ENCODE measurements at regions of chr10 and their contacts with region 1.

Region 1: DNA sequence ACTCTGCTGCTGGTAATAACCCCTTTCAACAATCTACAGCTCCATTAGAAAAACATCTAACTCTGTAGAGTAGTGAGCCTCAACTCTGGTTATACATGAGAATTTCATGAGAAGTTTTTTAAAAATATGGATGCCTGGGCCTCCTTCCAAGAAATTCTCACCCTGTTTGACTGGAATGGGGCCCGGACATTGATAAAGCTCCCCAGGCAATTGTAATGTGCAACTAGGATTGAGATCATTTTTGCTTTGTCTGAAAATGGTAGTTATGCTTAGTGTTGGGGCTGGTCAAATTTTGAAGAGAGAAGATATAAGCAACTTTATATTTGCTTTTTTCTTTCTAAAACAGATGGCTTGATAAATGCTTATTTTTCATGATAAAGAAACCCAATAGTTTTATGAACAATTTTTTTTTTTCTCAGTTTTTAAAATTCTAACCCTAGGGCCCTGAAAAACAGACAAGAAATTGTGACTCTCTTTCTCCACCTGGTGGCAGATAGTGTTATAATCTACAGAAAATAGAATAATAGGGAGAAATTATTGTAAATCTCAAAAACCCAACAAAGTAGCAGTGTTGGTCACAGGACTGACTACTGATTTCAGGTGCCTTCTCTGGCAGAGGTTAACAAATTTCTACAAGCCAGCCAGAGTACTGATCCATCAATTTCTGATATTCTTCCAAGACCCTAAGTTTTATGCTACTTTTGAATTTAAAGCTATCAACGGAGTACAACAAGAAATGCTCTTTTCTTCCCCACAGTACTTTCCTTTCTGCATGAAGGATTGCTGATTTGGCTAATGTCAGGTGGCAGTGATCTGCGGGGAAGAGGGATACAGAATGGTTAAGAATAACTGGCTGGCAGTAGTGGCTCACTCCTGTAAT is 174.8 kb downstream of the DKK1 start:
- DNase-seq: peak; percentile 99
- ATAC-seq: peak; percentile 21
- H3K4me3 ChIP-seq: peak overlapping the region; percentile 10; the same call in 1 of the 2 replicates
- H3K27ac ChIP-seq: peak overlapping the region; percentile 78
- H3K4me1 ChIP-seq: peaks cover 64% of the 10 kb centered on the region
- H3K27me3 ChIP-seq: no peaks in the 10 kb centered on the region
- CTCF ChIP-seq: peak; percentile 99

Region 2: GRCh38 chr10:50988792-50989191 is 1500.1 kb before region 1 on chr10:
- CTCF ChIA-PET with region 1: no interaction called
- POLR2A ChIA-PET with region 1: no interaction called
- intact Hi-C with region 1: loop called (anchors 5 kb)
- DNase-seq: peak; percentile 78
- ATAC-seq: no peak
- H3K4me3 ChIP-seq: no peak overlapping the region
- H3K27ac ChIP-seq: no peak overlapping the region
- H3K4me1 ChIP-seq: peaks cover 16% of the 10 kb centered on the region
- H3K27me3 ChIP-seq: peaks cover 61% of the 10 kb centered on the region
- CTCF ChIP-seq: peak; percentile 97

Region 3: GRCh38 chr10:52308251-52309031 is 180.4 kb before region 1 on chr10:
- CTCF ChIA-PET with region 1: interaction called, 56 read pairs
- POLR2A ChIA-PET with region 1: interaction called, 27 read pairs
- intact Hi-C with region 1: loop called (anchors 1 kb)
- DNase-seq: peak; percentile 94
- ATAC-seq: peak; percentile 86
- H3K4me3 ChIP-seq: peak overlapping the region; percentile 55
- H3K27ac ChIP-seq: 0 out of 2 replicates have a peak overlapping the region, but pooled peaks have one; percentile 2
- H3K4me1 ChIP-seq: peaks cover 36% of the 10 kb centered on the region
- H3K27me3 ChIP-seq: no peaks in the 10 kb centered on the region
- CTCF ChIP-seq: peak; percentile 99

Region 4: GRCh38 chr10:52409928-52410327 is 78.9 kb before region 1 on chr10:
- CTCF ChIA-PET with region 1: interaction called, 7 read pairs
- POLR2A ChIA-PET with region 1: no interaction called
- intact Hi-C with region 1: loop called (anchors 1 kb)
- DNase-seq: peak; percentile 67
- ATAC-seq: peak; percentile 25; the same call in 1 of the 2 replicates
- H3K4me3 ChIP-seq: no peak overlapping the region
- H3K27ac ChIP-seq: peak overlapping the region; percentile 31
- H3K4me1 ChIP-seq: peaks cover 20% of the 10 kb centered on the region
- H3K27me3 ChIP-seq: no peaks in the 10 kb centered on the region
- CTCF ChIP-seq: no peak

Region 5: GRCh38 chr10:52472366-52473146 is 16.3 kb before region 1 on chr10:
- CTCF ChIA-PET with region 1: interaction called, 9 read pairs
- POLR2A ChIA-PET with region 1: no interaction called
- intact Hi-C with region 1: loop called (anchors 1 kb)
- DNase-seq: peak; percentile 100
- ATAC-seq: peak; percentile 83
- H3K4me3 ChIP-seq: peak overlapping the region; percentile 38
- H3K27ac ChIP-seq: peak overlapping the region; percentile 85
- H3K4me1 ChIP-seq: peaks cover 63% of the 10 kb centered on the region
- H3K27me3 ChIP-seq: no peaks in the 10 kb centered on the region
- CTCF ChIP-seq: no peak

Region 6: DNA sequence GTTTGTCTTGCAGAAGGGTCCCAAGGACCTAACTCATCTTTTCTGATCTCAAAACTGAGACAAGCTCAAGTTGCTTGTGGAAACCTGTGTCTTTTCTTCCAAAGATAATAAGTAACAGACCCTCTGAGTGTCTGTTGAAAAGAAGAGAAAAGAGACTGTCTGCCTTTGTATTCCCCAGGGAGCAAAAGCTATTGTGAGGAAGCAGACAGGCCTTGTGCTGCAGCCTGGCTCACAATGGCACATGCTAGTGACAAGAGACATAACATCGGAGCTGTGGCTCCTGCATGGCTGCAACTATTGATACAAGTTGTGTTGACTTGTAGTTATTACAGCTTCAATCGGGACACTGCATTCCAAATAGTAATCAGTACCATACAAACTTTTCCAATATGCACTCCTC is 28.2 kb after region 1 on chr10:
- CTCF ChIA-PET with region 1: no interaction called
- POLR2A ChIA-PET with region 1: no interaction called
- intact Hi-C with region 1: no loop called
- DNase-seq: no peak
- ATAC-seq: no peak; the same call in 1 of the 2 replicates
- H3K4me3 ChIP-seq: no peak overlapping the region
- H3K27ac ChIP-seq: no peak overlapping the region
- H3K4me1 ChIP-seq: peaks cover 9% of the 10 kb centered on the region
- H3K27me3 ChIP-seq: no peaks in the 10 kb centered on the region
- CTCF ChIP-seq: no peak

Region 7: DNA sequence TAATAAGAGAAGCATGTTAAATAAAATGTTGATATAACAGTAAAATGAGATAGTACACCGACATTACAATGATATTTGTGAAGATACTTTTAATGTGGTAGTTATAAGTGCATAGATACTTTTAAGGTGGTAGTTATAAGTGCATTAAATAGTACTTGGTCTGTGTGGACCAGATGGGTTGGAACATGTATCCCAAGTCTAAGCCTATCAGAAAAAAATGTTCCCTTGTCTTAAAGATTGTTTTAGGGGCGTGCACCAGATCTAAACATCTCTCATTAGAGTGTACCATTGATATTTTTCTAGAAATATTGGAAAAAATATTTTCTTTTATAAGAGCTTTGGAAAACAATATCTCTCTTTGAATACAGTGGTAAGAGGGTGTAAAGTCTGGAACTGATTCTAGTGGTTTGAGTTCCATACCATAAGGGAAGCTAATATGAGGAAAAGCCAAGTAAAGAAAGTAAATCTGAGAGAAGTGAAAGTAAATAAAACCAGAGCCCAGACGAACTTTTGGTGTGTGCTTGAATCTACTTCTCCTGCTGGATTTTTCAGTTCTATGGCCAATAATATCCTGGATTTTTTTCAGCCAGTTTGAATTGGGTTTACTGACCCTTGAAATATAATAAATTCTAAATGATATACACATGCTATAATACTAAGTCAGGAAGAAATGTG is 108.5 kb after region 1 on chr10:
- CTCF ChIA-PET with region 1: no interaction called
- POLR2A ChIA-PET with region 1: interaction called, 3 read pairs
- intact Hi-C with region 1: loop called (anchors 1 kb)
- DNase-seq: peak; percentile 52
- ATAC-seq: peak; percentile 42
- H3K4me3 ChIP-seq: peak overlapping the region; percentile 61
- H3K27ac ChIP-seq: no peak overlapping the region
- H3K4me1 ChIP-seq: peaks cover 24% of the 10 kb centered on the region
- H3K27me3 ChIP-seq: no peaks in the 10 kb centered on the region
- CTCF ChIP-seq: no peak